Activated T-helper 1 cell treated with anti-CD3 and anti-CD28 coated beads, Interleukin-12 subunit alpha, Interleukin-12 subunit beta, Interleukin-2, Interleukin-4 antibody, amounts not matched to agents 30 ng/mL and 10 ng/mL and 1 ng/mL, durations not matched to agents 14 hours and 24 hours and 36 hours (primary cell): ENCODE measurements at regions of chr16 and their contacts with region 1.

Region 1: DNA sequence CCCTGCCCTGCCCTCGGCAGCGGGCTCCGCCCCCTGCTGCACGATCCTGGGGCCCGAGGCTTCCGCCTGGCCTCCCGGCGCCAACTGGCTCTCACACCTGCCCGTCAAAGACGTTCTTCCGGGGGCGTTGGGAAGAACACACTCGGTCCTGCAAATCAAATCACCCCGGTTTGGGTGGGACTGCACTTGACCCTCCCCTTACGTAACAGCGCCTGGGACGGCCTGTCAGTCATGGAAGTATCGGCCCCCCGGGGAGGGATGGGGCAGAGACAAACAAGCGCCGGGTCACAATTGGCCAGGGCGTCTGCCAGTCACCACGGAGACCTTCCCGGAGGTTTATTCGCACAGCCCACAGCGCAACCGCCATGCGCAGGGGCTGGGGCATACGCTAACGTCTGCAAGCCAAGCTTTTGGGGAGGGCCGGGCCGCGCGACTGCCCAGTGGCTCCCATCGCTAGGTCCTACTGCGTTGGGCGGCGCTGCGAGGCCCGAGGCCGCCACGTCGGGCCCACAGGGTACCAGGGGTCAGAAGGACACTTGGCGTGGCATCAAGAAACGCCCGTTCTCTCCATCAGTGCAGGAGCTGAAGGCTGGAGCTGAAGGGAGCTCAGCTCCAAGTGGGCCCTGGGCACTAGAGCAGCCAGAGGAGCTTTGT is 388 bp upstream of the AKTIP start:
- DNase-seq: peak; percentile 100
- H3K4me3 Mint-ChIP-seq: peak overlapping the region; percentile 87
- H3K27ac Mint-ChIP-seq: peak overlapping the region; percentile 93
- H3K4me1 Mint-ChIP-seq: peaks cover 70% of the 10 kb centered on the region
- H3K27me3 Mint-ChIP-seq: no peaks in the 10 kb centered on the region

Region 2: GRCh38 chr16:53266156-53266555 is 237.2 kb before region 1 on chr16:
- intact Hi-C with region 1: loop called (anchors 10 kb)
- DNase-seq: no peak
- H3K4me3 Mint-ChIP-seq: no peak overlapping the region
- H3K27ac Mint-ChIP-seq: no peak overlapping the region
- H3K4me1 Mint-ChIP-seq: no peaks in the 10 kb centered on the region
- H3K27me3 Mint-ChIP-seq: no peaks in the 10 kb centered on the region

Region 3: DNA sequence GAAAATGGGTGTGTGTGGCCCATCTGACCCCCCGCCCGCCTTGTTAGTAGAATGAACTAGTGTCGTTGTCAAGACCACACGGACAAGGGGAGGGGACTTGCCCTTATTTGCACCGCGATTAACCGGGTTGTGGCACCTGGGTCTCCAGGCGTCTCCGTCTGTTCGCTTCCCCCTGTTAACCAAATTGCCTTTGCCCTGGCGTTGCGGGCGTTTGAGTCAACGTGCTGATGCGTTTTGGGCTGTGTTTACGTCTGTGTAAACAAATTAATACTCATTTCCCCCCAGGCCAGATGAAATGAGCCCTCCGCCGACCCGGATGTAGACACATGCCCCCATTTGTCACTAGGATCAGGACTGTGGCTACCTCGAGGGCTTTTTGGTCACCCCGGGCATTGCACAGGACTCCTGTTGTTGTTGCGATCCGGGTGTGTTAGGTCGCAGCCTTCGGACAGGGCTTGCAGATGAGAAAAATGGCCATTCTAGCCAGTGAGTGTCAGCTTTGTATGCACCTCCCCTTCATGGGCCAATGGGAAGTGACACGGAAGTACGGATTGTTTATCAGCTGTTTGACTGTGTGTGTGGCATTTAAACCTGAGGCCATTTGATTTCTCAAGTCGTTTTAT is 68.2 kb before region 1 on chr16:
- intact Hi-C with region 1: loop called (anchors 1 kb)
- DNase-seq: peak; percentile 63
- H3K4me3 Mint-ChIP-seq: peak overlapping the region; percentile 99
- H3K27ac Mint-ChIP-seq: peak overlapping the region; percentile 98
- H3K4me1 Mint-ChIP-seq: peaks cover 38% of the 10 kb centered on the region
- H3K27me3 Mint-ChIP-seq: no peaks in the 10 kb centered on the region

Region 4: GRCh38 chr16:53489755-53490154 is 13.6 kb before region 1 on chr16:
- intact Hi-C with region 1: loop called (anchors 2 kb)
- DNase-seq: no peak
- H3K4me3 Mint-ChIP-seq: no peak overlapping the region
- H3K27ac Mint-ChIP-seq: no peak overlapping the region
- H3K4me1 Mint-ChIP-seq: peaks cover 14% of the 10 kb centered on the region
- H3K27me3 Mint-ChIP-seq: no peaks in the 10 kb centered on the region

Region 5: GRCh38 chr16:53530046-53530445 is 26.6 kb after region 1 on chr16:
- intact Hi-C with region 1: loop called (anchors 1 kb)
- DNase-seq: no peak
- H3K4me3 Mint-ChIP-seq: no peak overlapping the region
- H3K27ac Mint-ChIP-seq: no peak overlapping the region
- H3K4me1 Mint-ChIP-seq: peaks cover 18% of the 10 kb centered on the region
- H3K27me3 Mint-ChIP-seq: no peaks in the 10 kb centered on the region

Region 6: DNA sequence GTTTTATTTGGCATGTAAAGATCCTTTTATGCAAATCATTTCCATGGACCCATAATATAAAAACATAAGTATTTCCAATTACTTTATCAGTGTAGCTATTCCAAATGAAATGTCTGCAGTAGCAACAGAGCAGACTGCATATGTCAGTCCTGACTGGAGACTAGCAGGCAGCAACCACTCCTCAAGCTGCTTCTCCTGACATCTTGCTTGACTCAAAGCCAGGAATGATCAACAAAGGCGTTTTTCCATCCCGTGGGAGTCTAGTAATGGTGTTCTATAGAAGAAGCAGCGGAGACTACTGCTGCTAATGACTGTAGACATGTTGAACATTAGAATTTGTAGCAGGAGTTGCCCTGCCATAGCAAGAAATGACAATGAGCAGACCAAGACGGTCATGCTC is 72.8 kb after region 1 on chr16:
- intact Hi-C with region 1: no loop called
- DNase-seq: no peak
- H3K4me3 Mint-ChIP-seq: no peak overlapping the region
- H3K27ac Mint-ChIP-seq: no peak overlapping the region
- H3K4me1 Mint-ChIP-seq: no peaks in the 10 kb centered on the region
- H3K27me3 Mint-ChIP-seq: peaks cover 1% of the 10 kb centered on the region